CD4-positive, alpha-beta T cell (primary cell): ENCODE measurements at regions of chr4 and their contacts with region 1.

Region 1: DNA sequence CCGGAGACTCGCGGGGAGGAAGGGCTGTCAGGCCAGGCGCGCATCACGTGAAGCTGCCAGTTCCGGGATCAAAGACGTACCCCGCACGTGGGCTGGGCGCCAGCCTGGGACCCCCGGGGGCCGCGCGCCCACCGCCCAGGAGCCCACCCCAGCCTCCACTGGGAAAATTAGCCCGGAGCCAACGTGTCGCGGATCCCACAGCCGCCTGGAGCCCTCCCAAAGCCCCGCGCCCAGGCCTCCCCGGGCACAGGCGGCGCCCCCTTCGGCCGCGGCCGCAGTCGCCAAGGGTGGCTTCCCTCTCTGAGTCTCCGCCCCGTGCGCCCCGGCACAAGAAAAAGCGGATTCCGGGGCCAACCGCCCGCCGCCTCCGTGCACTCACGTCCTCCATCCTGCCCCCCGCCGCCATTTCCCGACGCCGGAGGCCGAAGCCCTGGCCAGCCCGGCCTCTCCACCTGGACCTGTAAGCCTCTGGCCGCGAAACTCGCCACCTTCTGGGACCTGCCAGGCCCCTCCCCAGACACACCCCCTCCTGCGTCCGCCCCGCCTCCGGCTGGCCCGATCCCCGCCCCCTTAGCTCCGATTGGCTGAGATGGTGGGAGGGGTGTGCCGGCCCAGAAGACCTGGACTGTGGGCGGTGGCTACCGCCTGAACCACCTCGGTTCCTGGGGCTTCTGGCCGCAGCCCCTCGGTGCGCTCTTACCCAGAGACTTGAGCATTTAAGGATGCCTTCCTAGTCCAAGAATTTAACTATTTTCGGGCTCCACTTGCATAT is at the start of gene TMEM192:
- DNase-seq: peak; percentile 84 to 93 (median 90)
- ATAC-seq: peak; percentile 97
- H3K4me3 ChIP-seq: peak within 1 kb of the TSS; percentile 88
- H3K4me3 Mint-ChIP-seq: peak within 1 kb of the TSS; percentile 93
- H3K27ac ChIP-seq: peak within 1 kb of the TSS; percentile 50 to 52
- H3K27ac Mint-ChIP-seq: peak within 1 kb of the TSS; percentile 84
- H3K4me1 ChIP-seq: peaks cover 12% of the 10 kb centered on the region
- H3K4me1 Mint-ChIP-seq: peaks cover 27% of the 10 kb centered on the region
- H3K27me3 ChIP-seq: no peaks in the 10 kb centered on the region
- H3K27me3 Mint-ChIP-seq: no peaks in the 10 kb centered on the region
- CTCF ChIP-seq: no peak
- total RNA-seq, gene TMEM192: 4.6 to 4.7 TPM

Region 2: DNA sequence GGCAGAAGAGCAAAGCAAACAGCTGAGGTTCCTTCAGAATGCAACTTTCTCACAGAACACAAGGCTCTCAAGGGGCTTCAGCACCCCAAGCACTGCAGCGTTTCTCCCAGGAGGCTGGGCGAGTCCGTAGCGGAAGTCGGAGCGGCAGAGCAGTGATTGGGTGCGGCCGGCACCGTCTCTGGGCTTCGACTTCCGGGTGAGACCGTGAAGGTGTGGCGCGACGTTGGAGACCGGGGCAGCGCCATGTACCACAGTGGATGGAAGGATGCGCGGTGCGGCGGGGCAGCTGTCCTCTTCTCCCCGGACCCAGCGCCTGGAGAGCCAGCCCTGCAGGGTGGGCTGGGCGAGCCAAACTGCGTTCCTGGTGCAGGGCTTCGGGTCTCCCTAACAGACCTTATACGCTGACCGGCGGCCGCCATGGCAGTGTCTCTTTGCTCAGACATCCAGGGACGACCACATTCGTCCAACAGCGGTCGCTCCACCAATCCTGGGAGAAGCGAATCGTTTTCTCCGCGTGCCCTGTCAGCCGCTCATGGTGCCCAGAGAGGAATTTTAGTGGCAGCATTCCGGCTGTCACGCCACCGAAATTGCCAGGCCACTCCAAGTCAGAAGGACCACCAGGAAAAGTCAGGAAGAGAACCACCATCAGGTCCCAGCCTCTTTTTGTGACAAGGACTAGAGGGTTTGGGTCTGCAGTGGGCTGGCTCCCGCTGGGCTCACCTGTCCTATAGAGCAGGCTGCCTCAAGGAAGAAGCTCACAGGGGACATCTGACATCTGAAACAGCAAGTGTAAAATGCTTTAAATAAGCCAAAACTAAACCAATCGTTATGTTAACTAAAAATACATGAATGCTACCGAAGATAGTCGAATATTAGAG is 155.5 kb before region 1 on chr4:
- CTCF ChIA-PET with region 1: no interaction called
- POLR2A ChIA-PET with region 1: no interaction called
- intact Hi-C with region 1: loop called in 1 of 2 experiments (anchors 10 kb)
- DNase-seq: peak; percentile 42 to 84 (median 68)
- ATAC-seq: peak; percentile 98
- H3K4me3 ChIP-seq: peak overlapping the region; percentile 81
- H3K4me3 Mint-ChIP-seq: peak overlapping the region; percentile 85
- H3K27ac ChIP-seq: no peak overlapping the region
- H3K27ac Mint-ChIP-seq: peak overlapping the region; percentile 49
- H3K4me1 ChIP-seq: peaks cover 11% of the 10 kb centered on the region
- H3K4me1 Mint-ChIP-seq: peaks cover 20% of the 10 kb centered on the region
- H3K27me3 ChIP-seq: no peaks in the 10 kb centered on the region
- H3K27me3 Mint-ChIP-seq: peaks cover 15% of the 10 kb centered on the region
- CTCF ChIP-seq: no peak

Region 3: DNA sequence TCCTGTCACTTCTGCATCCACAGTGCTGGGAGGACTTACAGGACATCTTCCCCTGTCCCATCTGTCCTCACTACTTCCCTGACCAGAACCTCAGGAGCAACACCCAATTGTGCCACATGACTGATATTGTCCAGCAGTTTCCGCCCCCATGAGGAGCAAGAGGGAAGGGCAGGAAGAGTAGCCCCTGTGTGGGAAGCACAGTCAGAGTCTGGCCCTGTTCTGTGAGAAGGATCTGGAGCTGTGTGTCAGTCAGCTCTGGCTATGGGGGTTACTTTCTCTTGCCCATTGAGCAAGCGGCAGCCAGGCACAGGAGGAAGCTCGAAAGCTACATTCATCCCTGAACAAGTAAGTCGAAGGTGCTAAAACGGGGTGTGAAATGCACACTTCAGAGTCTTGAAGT is 95.6 kb before region 1 on chr4:
- CTCF ChIA-PET with region 1: no interaction called
- POLR2A ChIA-PET with region 1: no interaction called
- intact Hi-C with region 1: no loop called
- DNase-seq: no peak
- ATAC-seq: no peak
- H3K4me3 ChIP-seq: no peak overlapping the region
- H3K4me3 Mint-ChIP-seq: no peak overlapping the region
- H3K27ac ChIP-seq: no peak overlapping the region
- H3K27ac Mint-ChIP-seq: no peak overlapping the region
- H3K4me1 ChIP-seq: no peaks in the 10 kb centered on the region
- H3K4me1 Mint-ChIP-seq: no peaks in the 10 kb centered on the region
- H3K27me3 ChIP-seq: no peaks in the 10 kb centered on the region
- H3K27me3 Mint-ChIP-seq: no peaks in the 10 kb centered on the region
- CTCF ChIP-seq: no peak

Region 4: GRCh38 chr4:165327211-165328100 is 214.9 kb after region 1 on chr4 and contains the start of gene MSMO1:
- CTCF ChIA-PET with region 1: interaction called, 5 read pairs
- POLR2A ChIA-PET with region 1: interaction called, 25 read pairs
- intact Hi-C with region 1: loop called (anchors 2 kb)
- DNase-seq: peak; percentile 94 to 99 (median 97)
- ATAC-seq: peak; percentile 95
- H3K4me3 ChIP-seq: peak within 1 kb of the TSS; percentile 95
- H3K4me3 Mint-ChIP-seq: no peak within 1 kb of the TSS
- H3K27ac ChIP-seq: peak within 1 kb of the TSS; percentile 70 to 79
- H3K27ac Mint-ChIP-seq: no peak within 1 kb of the TSS
- H3K4me1 ChIP-seq: peaks cover 33% of the 10 kb centered on the region
- H3K4me1 Mint-ChIP-seq: peaks cover 23% of the 10 kb centered on the region
- H3K27me3 ChIP-seq: no peaks in the 10 kb centered on the region
- H3K27me3 Mint-ChIP-seq: no peaks in the 10 kb centered on the region
- CTCF ChIP-seq: no peak
- total RNA-seq, gene MSMO1: 13.3 to 15.1 TPM